ENCODE measurements at regions of chr7 and their contacts with region 1.

Region 1: DNA sequence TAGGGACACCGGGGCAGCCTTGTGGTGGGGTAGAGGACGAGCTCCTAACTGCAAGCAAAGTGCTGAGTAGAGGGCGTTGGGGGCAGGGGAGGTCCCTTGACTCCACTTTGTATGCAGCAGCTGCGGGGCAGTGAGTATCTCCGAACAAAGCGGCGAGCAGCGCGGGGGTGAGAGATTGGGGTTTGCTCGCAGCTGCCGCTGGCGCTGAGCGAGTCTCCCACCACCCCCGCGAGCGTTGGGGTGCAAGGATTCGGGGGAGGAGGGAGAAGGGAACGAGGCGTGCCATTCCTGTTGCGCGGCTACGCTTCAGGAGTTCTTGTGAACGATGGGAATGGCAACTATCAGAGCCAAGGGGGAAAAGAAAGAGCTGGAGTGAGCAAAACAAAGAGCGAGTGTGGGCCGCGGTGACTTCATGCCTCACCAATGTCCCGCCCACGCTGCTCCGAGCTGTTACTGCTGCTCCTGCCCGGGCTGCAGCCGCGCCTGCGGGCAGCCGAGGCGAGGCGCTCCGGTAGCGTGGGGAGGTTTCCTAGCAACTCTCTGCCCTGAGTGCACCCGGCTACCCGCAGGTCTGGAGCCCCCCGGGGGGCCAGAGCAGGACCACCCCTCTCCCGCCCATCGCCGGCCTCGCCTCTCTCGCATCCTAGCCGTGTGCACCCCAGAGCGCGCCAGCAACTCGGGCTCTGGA is at the start of gene ITGB8:
- DNase-seq: no peak
- ATAC-seq: peak; percentile 69
- H3K4me3 Mint-ChIP-seq: peak within 1 kb of the TSS; percentile 95
- H3K27ac Mint-ChIP-seq: peak within 1 kb of the TSS; percentile 84
- H3K4me1 Mint-ChIP-seq: peaks cover 37% of the 10 kb centered on the region
- H3K27me3 Mint-ChIP-seq: peaks cover 2% of the 10 kb centered on the region
- CTCF ChIP-seq: no peak
- total RNA-seq, gene ITGB8: 0.75 and 1.3 TPM in 2 replicates

Region 2: DNA sequence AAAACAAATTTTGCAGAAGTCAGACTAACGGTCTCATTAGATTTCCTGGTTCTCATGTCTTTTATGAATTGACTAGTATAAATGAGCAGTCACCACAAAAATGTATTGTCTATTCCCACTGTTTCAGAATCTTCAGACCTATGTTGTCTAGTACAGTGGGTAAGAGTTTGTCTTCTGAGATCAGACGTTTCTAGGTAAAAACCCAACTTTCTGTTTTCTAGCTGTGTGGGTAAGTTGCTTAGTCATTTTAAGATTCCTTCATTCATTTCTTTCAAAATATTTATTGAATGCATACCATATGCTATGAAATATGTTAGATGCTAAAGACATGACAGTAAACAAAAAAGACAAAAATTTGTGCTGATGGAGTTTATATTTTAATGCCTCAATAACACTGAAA is 777.8 kb before region 1 on chr7:
- CTCF ChIA-PET with region 1: no interaction called
- POLR2A ChIA-PET with region 1: no interaction called
- intact Hi-C with region 1: no loop called
- DNase-seq: no peak
- ATAC-seq: no peak
- H3K4me3 Mint-ChIP-seq: no peak overlapping the region
- H3K27ac Mint-ChIP-seq: no peak overlapping the region
- H3K4me1 Mint-ChIP-seq: no peaks in the 10 kb centered on the region
- H3K27me3 Mint-ChIP-seq: no peaks in the 10 kb centered on the region
- CTCF ChIP-seq: no peak

Region 3: GRCh38 chr7:20021831-20022230 is 308.6 kb before region 1 on chr7:
- CTCF ChIA-PET with region 1: no interaction called
- POLR2A ChIA-PET with region 1: interaction called, 5 read pairs
- intact Hi-C with region 1: loop called (anchors 5 kb)
- DNase-seq: no peak
- ATAC-seq: peak; percentile 80
- H3K4me3 Mint-ChIP-seq: peak overlapping the region; percentile 13
- H3K27ac Mint-ChIP-seq: no peak overlapping the region
- H3K4me1 Mint-ChIP-seq: peaks cover 42% of the 10 kb centered on the region
- H3K27me3 Mint-ChIP-seq: no peaks in the 10 kb centered on the region
- CTCF ChIP-seq: no peak

Region 4: GRCh38 chr7:20417260-20417659 is 86.9 kb after region 1 on chr7:
- CTCF ChIA-PET with region 1: no interaction called
- POLR2A ChIA-PET with region 1: no interaction called
- intact Hi-C with region 1: no loop called
- DNase-seq: no peak
- ATAC-seq: no peak
- H3K4me3 Mint-ChIP-seq: no peak overlapping the region
- H3K27ac Mint-ChIP-seq: no peak overlapping the region
- H3K4me1 Mint-ChIP-seq: no peaks in the 10 kb centered on the region
- H3K27me3 Mint-ChIP-seq: no peaks in the 10 kb centered on the region
- CTCF ChIP-seq: no peak

Region 5: GRCh38 chr7:20438694-20439376 is 108.5 kb after region 1 on chr7:
- CTCF ChIA-PET with region 1: no interaction called
- POLR2A ChIA-PET with region 1: no interaction called
- intact Hi-C with region 1: loop called (anchors 2 kb)
- DNase-seq: no peak
- ATAC-seq: peak; percentile 88
- H3K4me3 Mint-ChIP-seq: peak overlapping the region; percentile 13
- H3K27ac Mint-ChIP-seq: no peak overlapping the region
- H3K4me1 Mint-ChIP-seq: peaks cover 28% of the 10 kb centered on the region
- H3K27me3 Mint-ChIP-seq: peaks cover 7% of the 10 kb centered on the region
- CTCF ChIP-seq: no peak